GM12878 (cell line): ENCODE measurements at regions of chr4 and their contacts with region 1.

Region 1: DNA sequence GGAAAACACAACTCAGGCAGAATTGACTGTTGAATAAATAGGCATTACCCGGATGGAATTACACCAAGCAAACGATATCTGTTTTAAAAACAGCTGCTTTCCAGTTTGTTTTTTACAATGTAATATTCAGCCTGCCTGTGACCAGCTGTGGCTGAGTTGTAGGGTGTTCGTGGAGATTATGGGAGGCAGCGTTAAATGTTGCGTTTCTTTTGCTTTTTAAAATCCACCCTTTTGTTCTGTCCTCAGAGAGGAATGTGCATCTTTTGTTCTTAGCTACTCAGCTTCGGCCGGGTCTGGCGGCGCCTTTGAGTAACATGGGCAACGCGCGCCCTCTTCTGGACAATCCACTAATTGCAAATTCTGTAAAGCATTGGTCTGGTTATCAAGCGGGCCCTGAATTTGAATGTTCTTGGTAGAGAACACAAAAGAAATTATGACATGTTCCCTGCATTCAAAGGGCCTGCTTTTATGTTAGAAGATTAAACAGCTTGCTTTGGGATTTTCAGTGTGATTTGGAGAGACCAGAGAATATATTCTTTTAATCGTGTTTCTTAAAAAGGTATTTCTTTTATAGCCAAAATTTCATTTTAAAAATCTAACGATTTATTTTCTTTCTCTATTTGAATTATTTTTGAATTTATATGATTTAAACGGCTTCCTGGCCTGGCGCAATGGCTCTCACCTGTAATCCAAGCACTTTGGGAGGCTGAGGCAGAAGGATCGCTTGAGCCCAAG is 76.3 kb upstream of the TRIM2 start:
- DNase-seq: peak; percentile 27
- ATAC-seq: peak; percentile 96
- H3K4me3 ChIP-seq: no peak overlapping the region
- H3K27ac ChIP-seq: no peak overlapping the region
- H3K4me1 ChIP-seq: no peaks in the 10 kb centered on the region
- H3K27me3 ChIP-seq: no peaks in the 10 kb centered on the region
- CTCF ChIP-seq: peak; percentile 76 to 92 (median 80)
- EP300 ChIP-seq: no peak
- POLR2A ChIP-seq: no peak
- RAD21 ChIP-seq: peak; percentile 92

Region 2: DNA sequence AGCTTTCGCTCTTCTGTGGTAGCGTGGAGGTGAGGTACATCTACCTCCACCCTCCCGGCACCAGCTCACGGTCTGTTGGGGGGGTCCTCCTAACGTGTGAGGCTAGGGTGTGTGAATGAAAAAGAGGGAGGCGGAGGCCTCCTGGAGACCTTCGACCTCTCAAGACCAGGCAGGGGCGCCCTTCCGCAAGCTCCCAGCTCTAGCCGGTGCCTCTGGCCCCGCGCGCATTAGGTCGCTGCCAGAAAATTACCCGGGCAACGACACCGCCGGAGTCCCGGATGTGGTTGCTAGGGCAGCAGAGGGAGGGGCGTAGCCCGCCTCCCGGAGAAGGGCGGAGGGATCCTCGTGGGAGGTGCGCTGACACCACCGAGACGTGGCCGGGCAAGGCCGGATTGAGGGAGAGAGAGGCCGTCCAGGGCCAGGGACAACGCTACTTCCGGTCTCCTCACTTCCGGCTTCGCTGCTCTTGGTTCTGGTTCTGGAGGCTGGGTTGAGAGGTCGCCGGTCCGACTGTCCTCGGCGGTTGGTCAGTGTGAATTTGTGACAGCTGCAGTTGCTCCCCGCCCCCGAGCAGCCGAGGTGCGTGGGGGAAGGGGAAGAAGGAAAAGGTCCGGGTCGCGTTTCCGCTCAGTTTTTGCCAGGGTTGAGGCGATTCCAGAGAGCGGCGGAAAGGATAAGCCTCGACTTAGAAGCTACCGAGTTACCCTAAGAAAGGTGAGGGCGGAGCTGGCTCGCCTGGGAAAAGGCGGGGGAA is 348.2 kb before region 1 on chr4 and contains the starts of genes ARFIP1 and TIGD4:
- CTCF ChIA-PET with region 1: interaction called, 10 read pairs
- POLR2A ChIA-PET with region 1: no interaction called
- RAD21 ChIA-PET with region 1: interaction called, 6 read pairs
- SMC1A ChIA-PET with region 1: interaction called, 18 read pairs
- in situ Hi-C with region 1: no loop called
- intact Hi-C with region 1: no loop called
- DNase-seq: peak; percentile 90
- ATAC-seq: peak; percentile 93
- H3K4me3 ChIP-seq: peak within 1 kb of the TSS; percentile 91
- H3K27ac ChIP-seq: peak within 1 kb of the TSS; percentile 87
- H3K4me1 ChIP-seq: peaks cover 5% of the 10 kb centered on the region
- H3K27me3 ChIP-seq: no peaks in the 10 kb centered on the region
- CTCF ChIP-seq: peak; percentile 23 to 50 (median 35); a peak in 5 of 6 replicates
- EP300 ChIP-seq: no peak
- POLR2A ChIP-seq: peak; percentile 84
- RAD21 ChIP-seq: peak; percentile 35; the same call in 1 of the 2 replicates
- polyA plus RNA-seq, gene ARFIP1: 9.5 to 11.0 TPM
- polyA plus RNA-seq, gene TIGD4: 0.24 to 0.31 TPM

Region 3: GRCh38 chr4:152843481-152844090 is 284.3 kb before region 1 on chr4:
- CTCF ChIA-PET with region 1: interaction called, 94 read pairs
- POLR2A ChIA-PET with region 1: no interaction called
- RAD21 ChIA-PET with region 1: interaction called, 19 read pairs
- SMC1A ChIA-PET with region 1: interaction called, 49 read pairs
- in situ Hi-C with region 1: no loop called
- intact Hi-C with region 1: loop called (anchors 1 kb)
- DNase-seq: no peak
- ATAC-seq: no peak
- H3K4me3 ChIP-seq: no peak overlapping the region
- H3K27ac ChIP-seq: no peak overlapping the region
- H3K4me1 ChIP-seq: no peaks in the 10 kb centered on the region
- H3K27me3 ChIP-seq: no peaks in the 10 kb centered on the region
- CTCF ChIP-seq: no peak
- EP300 ChIP-seq: no peak
- POLR2A ChIP-seq: no peak
- RAD21 ChIP-seq: no peak

Region 4: DNA sequence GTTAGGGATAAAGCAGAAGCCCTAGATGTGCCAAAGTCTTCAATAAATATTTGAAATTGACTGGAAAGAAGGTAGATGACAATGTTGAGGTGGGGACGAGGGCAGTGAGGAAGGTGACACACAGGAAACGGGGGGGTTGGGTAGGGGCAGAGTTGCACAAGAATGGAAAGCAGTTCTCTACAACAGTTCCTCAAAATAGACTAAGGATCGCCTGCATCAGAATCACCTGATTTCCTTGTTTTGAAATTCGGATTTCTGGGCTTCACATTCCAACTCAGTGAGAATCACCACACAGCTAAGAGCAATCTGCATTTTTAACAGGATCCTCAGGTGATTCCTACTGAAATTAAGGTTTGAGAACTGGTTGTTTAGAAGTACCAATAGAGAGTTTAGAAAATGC is 277.6 kb before region 1 on chr4:
- CTCF ChIA-PET with region 1: interaction called, 94 read pairs
- POLR2A ChIA-PET with region 1: no interaction called
- RAD21 ChIA-PET with region 1: interaction called, 19 read pairs
- SMC1A ChIA-PET with region 1: interaction called, 49 read pairs
- in situ Hi-C with region 1: loop called (anchors 5 kb)
- intact Hi-C with region 1: loop called (anchors 1 kb)
- DNase-seq: peak; percentile 25
- ATAC-seq: peak; percentile 92
- H3K4me3 ChIP-seq: peak overlapping the region; percentile 10; the same call in 1 of the 2 replicates
- H3K27ac ChIP-seq: peak overlapping the region; percentile 66
- H3K4me1 ChIP-seq: peaks cover 6% of the 10 kb centered on the region
- H3K27me3 ChIP-seq: no peaks in the 10 kb centered on the region
- CTCF ChIP-seq: no peak
- EP300 ChIP-seq: no peak
- POLR2A ChIP-seq: no peak
- RAD21 ChIP-seq: no peak

Region 5: GRCh38 chr4:153089742-153090141 is 38.2 kb before region 1 on chr4:
- CTCF ChIA-PET with region 1: interaction called, 269 read pairs
- POLR2A ChIA-PET with region 1: interaction called, 3 read pairs
- RAD21 ChIA-PET with region 1: interaction called, 26 read pairs
- SMC1A ChIA-PET with region 1: interaction called, 37 read pairs
- in situ Hi-C with region 1: no loop called
- intact Hi-C with region 1: loop called (anchors 1 kb)
- DNase-seq: no peak
- ATAC-seq: no peak
- H3K4me3 ChIP-seq: no peak overlapping the region
- H3K27ac ChIP-seq: no peak overlapping the region
- H3K4me1 ChIP-seq: no peaks in the 10 kb centered on the region
- H3K27me3 ChIP-seq: no peaks in the 10 kb centered on the region
- CTCF ChIP-seq: no peak
- EP300 ChIP-seq: no peak
- POLR2A ChIP-seq: no peak
- RAD21 ChIP-seq: no peak

Region 6: DNA sequence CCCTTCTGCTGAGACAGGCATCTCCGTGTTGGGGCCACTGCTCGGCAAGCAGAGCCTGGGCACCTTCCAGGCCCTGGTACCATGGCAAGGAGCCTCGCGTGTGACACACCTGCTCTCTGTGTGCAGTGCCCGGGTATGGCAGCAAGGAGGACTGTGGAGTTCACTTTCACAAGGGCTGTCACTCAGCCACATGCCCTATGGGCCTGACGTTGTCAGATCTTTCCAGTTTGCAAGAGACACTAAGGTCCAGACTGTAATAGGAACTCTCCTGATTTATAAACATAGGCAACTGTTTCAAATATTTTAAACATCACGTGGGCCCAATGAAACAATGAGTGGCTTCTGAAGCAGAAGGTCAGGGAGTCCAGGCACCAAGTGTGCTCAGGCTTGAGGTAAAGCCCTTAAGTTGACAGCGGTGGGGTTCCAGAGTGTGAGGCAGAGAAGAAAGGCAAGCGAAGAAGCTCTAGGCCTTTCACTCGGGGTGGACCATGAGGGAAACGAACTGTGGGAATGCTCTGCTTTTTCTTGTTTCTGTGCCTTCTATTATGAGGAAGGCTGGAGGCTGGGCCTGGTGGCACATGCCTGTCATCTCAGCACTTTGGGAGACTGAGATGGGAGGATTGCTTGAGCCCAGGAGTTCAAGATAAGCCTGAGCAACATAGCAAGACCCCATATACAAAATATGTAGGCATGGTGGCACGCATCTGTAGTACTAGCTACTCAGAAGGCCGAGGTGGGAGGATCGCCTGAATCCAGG is 32.3 kb before region 1 on chr4:
- CTCF ChIA-PET with region 1: interaction called, 34 read pairs
- POLR2A ChIA-PET with region 1: no interaction called
- RAD21 ChIA-PET with region 1: no interaction called
- SMC1A ChIA-PET with region 1: interaction called, 22 read pairs
- in situ Hi-C with region 1: no loop called
- intact Hi-C with region 1: no loop called
- DNase-seq: no peak
- ATAC-seq: peak; percentile 37; the same call in 2 of the 3 replicates
- H3K4me3 ChIP-seq: no peak overlapping the region
- H3K27ac ChIP-seq: no peak overlapping the region
- H3K4me1 ChIP-seq: no peaks in the 10 kb centered on the region
- H3K27me3 ChIP-seq: no peaks in the 10 kb centered on the region
- CTCF ChIP-seq: no peak
- EP300 ChIP-seq: no peak
- POLR2A ChIP-seq: no peak
- RAD21 ChIP-seq: no peak

Region 7: DNA sequence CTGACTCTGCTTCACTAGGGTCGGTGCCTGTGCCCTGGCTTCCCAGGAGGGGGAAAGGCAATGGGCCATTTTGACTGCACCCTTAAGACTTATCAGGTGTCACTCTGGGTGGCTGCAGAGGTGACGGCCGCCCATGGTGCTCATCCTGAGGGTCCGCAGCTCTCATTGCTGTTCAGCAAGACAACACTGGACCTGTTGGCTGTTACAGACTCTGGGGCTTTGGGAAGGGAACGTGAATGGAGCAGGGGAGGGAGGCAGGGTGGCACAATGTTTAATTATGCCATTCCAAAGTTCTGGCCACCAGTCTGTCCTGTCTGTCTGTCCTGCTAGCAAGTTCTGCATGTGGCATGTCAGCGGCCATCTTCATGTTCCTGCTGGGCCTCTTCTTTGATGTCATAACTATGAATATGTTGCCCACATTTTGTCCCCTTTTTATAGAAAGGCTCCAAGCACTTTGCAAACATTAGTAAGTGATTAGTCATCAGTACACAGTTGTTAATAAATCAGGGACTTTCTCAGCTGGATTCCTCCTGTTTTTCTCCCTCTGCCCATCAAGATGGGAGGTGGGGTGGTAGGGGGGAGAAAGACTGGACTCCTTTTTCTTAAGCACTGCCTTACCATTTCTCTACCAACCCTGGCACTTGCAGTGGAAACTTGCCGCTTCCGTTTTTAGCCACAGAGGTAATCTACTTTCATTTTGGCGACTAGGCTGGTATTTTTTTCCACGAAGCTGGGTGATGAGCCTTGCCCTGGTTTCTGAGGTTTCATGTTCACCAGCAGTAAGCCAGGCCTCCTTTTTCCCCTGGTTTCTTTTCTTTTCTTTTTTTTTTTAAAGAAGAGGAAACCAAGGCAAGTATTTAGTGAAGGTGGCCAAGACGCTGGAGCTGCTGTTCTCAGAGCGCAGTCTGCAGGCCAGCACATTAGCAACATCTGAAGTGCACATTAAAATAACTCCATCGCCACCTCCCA is 12.3 kb before region 1 on chr4:
- CTCF ChIA-PET with region 1: interaction called, 27 read pairs
- POLR2A ChIA-PET with region 1: no interaction called
- RAD21 ChIA-PET with region 1: interaction called, 11 read pairs
- SMC1A ChIA-PET with region 1: interaction called, 8 read pairs
- in situ Hi-C with region 1: no loop called
- intact Hi-C with region 1: no loop called
- DNase-seq: peak; percentile 79
- ATAC-seq: peak; percentile 94
- H3K4me3 ChIP-seq: peak overlapping the region; percentile 40; the same call in 1 of the 2 replicates
- H3K27ac ChIP-seq: no peak overlapping the region
- H3K4me1 ChIP-seq: peaks cover 8% of the 10 kb centered on the region; the same call in 1 of the 2 replicates
- H3K27me3 ChIP-seq: peaks cover 0 to 2% of the 10 kb centered on the region in 2 experiments; a peak in 1 of 4 replicates
- CTCF ChIP-seq: no peak
- EP300 ChIP-seq: no peak
- POLR2A ChIP-seq: no peak
- RAD21 ChIP-seq: no peak

Region 8: DNA sequence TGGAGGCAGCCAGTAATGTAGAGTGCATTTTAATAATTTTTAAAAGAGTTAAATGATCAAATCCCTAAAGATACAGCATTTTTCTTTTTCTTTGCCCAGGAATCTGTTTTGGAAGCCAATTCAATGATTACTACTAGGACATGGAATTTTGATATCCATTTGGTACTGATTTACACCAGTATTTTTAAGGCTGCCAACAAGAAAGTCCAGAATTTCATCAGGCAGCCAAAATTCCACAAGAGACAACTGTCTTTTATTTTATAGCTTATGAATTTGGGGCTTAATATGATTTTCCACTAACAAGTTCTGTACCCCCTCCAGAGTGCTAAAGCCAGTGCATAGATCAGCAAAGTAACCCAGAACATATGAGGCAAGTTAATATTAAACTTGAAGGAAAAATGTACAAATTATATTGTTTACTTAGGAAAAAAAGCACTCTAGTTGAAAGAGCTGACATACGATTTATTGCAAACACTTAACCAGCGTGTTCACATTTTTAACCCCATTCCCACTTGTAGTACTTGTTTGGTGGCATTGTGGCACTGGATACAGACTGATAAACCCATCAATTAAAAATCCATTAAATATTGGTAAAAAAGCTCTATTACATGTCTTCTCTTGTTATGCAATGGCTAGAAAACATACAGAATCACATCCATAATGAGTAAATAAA is 1104.0 kb after region 1 on chr4:
- CTCF ChIA-PET with region 1: no interaction called
- POLR2A ChIA-PET with region 1: no interaction called
- RAD21 ChIA-PET with region 1: no interaction called
- SMC1A ChIA-PET with region 1: no interaction called
- in situ Hi-C with region 1: no loop called
- intact Hi-C with region 1: no loop called
- DNase-seq: no peak
- ATAC-seq: no peak
- H3K4me3 ChIP-seq: no peak overlapping the region
- H3K27ac ChIP-seq: no peak overlapping the region
- H3K4me1 ChIP-seq: no peaks in the 10 kb centered on the region
- H3K27me3 ChIP-seq: no peaks in the 10 kb centered on the region
- CTCF ChIP-seq: no peak
- EP300 ChIP-seq: no peak
- POLR2A ChIP-seq: no peak
- RAD21 ChIP-seq: no peak